ENCODE measurements at regions of chr7 and their contacts with region 1.

Region 1: GRCh38 chr7:95690367-95690947 is 81.9 kb upstream of the DYNC1I1 start:
- DNase-seq: peak; percentile 59
- H3K4me3 ChIP-seq: no peak overlapping the region
- H3K27ac ChIP-seq: no peak overlapping the region
- H3K4me1 ChIP-seq: no peaks in the 10 kb centered on the region
- H3K27me3 ChIP-seq: peaks cover 0 to 5% of the 10 kb centered on the region in 2 experiments
- CTCF ChIP-seq: peak; percentile 37 to 42
- POLR2A ChIP-seq: no peak

Region 2: DNA sequence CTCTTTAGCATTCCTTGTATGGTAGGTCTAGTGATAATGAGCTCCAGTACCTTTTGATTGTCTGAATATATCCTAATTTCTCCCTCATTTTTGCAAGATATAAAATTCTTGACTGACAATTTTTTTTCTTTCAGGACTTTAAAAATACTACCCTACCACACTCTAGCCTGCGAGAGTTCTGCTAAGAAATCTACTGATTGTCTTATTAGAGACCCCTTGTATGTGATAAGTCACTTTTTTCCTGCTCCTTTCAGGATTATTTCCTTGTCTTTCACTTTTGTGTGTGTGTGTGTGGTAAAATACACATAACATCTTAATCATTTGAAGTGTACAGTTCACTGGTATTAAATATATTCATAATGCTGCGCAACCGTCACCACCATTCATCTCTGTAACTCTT is 851.7 kb before region 1 on chr7:
- CTCF ChIA-PET with region 1: no interaction called
- POLR2A ChIA-PET with region 1: no interaction called
- dilution Hi-C with region 1: no loop called
- intact Hi-C with region 1: no loop called
- DNase-seq: no peak
- H3K4me3 ChIP-seq: no peak overlapping the region
- H3K27ac ChIP-seq: no peak overlapping the region
- H3K4me1 ChIP-seq: no peaks in the 10 kb centered on the region
- H3K27me3 ChIP-seq: no peaks in the 10 kb centered on the region
- CTCF ChIP-seq: no peak
- POLR2A ChIP-seq: no peak

Region 3: DNA sequence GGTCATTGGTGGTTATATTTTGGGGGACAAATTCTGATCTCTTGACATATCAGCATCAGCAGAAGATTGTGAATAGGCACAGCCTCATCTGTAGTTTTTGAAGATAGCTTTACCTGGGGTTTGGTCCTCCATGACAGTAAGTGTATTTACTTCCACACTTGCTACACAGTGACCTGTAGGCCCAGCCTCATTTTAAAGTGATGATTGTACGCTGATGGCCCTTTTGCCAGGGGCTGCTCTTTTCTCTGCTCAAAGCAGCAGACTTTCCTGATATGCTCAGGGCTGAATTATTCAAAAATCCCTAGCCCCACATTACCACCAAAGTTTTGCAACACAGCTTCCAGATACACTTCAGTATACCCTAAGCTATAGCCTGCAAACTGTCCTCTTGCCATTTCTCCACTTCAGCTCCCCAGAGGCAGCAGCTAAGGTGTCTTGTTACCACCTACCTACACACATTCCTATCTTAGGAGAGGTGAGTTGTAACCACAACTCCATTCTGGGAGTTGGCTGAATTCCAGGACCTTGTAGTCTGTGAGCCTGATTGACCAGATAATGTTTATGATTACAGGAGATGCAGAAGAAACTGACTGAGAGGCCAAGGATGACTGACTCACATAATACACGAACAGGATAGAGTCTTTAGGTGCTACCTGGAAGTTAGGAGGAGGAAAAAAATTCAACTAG is 198.7 kb before region 1 on chr7:
- CTCF ChIA-PET with region 1: interaction called, 14 read pairs
- POLR2A ChIA-PET with region 1: no interaction called
- dilution Hi-C with region 1: no loop called
- intact Hi-C with region 1: no loop called
- DNase-seq: no peak
- H3K4me3 ChIP-seq: no peak overlapping the region
- H3K27ac ChIP-seq: no peak overlapping the region
- H3K4me1 ChIP-seq: no peaks in the 10 kb centered on the region
- H3K27me3 ChIP-seq: peaks cover 3% of the 10 kb centered on the region in 2 experiments
- CTCF ChIP-seq: no peak
- POLR2A ChIP-seq: no peak

Region 4: GRCh38 chr7:95501261-95501832 is 189.1 kb before region 1 on chr7:
- CTCF ChIA-PET with region 1: interaction called, 12 read pairs
- POLR2A ChIA-PET with region 1: no interaction called
- dilution Hi-C with region 1: no loop called
- intact Hi-C with region 1: no loop called
- DNase-seq: no peak
- H3K4me3 ChIP-seq: no peak overlapping the region
- H3K27ac ChIP-seq: no peak overlapping the region
- H3K4me1 ChIP-seq: peaks cover 9% of the 10 kb centered on the region
- H3K27me3 ChIP-seq: no peaks in the 10 kb centered on the region
- CTCF ChIP-seq: no peak
- POLR2A ChIP-seq: no peak

Region 5: GRCh38 chr7:95527033-95527775 is 163.3 kb before region 1 on chr7:
- CTCF ChIA-PET with region 1: interaction called, 917 read pairs
- POLR2A ChIA-PET with region 1: no interaction called
- dilution Hi-C with region 1: no loop called
- intact Hi-C with region 1: loop called (anchors 1 kb)
- DNase-seq: peak; percentile 52
- H3K4me3 ChIP-seq: no peak overlapping the region
- H3K27ac ChIP-seq: no peak overlapping the region
- H3K4me1 ChIP-seq: peaks cover 2% of the 10 kb centered on the region
- H3K27me3 ChIP-seq: peaks cover 12 to 13% of the 10 kb centered on the region in 2 experiments
- CTCF ChIP-seq: peak; percentile 75 to 78
- POLR2A ChIP-seq: no peak

Region 6: DNA sequence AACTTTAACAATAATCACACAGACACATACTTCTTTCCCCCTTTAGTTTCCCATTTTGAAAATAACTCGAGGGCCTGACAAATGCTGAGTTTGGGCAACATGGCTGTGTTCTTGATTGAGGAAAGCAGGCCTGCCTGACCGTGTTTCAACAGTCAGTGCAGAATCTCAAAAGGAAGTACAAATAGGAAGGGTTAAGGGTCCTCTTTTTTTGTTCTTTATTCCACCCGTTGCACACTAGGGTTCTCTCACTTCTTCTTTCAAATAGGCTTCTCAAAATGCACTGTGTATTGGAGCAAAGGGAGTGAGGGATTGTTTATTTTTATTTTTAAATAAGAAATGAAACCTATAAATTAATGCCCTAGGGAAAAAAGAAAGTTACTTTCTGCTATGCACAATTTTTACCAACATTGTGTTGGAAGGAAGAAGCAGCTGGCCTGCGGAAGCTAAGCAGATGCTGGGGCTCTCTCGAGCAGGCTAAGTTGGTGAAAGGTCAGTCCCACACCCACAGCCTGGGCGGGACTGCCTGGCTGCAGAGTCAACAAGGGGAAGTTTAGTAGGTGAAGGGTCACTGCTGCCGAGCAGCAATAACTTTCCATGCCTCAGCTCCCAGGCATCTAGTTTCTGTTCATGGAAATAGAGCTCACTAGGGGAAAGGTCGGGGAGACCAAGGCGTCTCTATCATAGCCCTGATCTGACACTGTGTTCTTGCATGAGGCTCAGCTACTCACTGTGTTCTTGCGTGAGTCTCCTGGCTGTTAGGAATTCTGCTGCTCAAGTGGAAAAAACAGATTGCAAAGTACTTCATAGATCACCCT is 81.9 kb before region 1 on chr7:
- CTCF ChIA-PET with region 1: interaction called, 10 read pairs
- POLR2A ChIA-PET with region 1: no interaction called
- dilution Hi-C with region 1: no loop called
- intact Hi-C with region 1: no loop called
- DNase-seq: peak; percentile 99
- H3K4me3 ChIP-seq: peak overlapping the region in 1 of 3 experiments; percentile 38
- H3K27ac ChIP-seq: no peak overlapping the region
- H3K4me1 ChIP-seq: peaks cover 21% of the 10 kb centered on the region
- H3K27me3 ChIP-seq: peaks cover 0 to 2% of the 10 kb centered on the region in 2 experiments
- CTCF ChIP-seq: no peak
- POLR2A ChIP-seq: no peak

Region 7: DNA sequence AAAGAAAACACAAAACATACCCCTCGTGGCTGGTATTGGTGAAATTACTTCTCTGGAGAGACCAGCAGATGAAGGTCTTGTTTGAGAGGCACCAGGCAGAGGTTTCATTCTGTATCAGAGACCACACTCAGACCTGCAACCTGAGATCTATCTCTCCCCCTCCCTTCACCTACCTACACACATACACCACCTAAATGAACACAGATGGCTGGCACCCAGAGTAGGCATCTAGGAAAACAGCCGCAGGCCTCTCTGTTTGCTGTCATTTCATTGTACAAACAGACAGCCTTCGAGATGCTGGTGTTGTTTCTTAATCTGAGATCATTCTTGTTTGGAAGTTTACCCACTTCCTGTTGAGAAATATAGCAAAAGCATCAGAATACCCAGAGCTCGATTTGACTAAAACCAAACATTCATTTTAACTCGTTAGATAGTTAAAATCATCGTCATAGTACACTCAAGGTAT is 805.3 kb after region 1 on chr7:
- CTCF ChIA-PET with region 1: no interaction called
- POLR2A ChIA-PET with region 1: no interaction called
- dilution Hi-C with region 1: no loop called
- intact Hi-C with region 1: no loop called
- DNase-seq: no peak
- H3K4me3 ChIP-seq: no peak overlapping the region
- H3K27ac ChIP-seq: no peak overlapping the region
- H3K4me1 ChIP-seq: no peaks in the 10 kb centered on the region
- H3K27me3 ChIP-seq: peaks cover 1 to 3% of the 10 kb centered on the region in 2 experiments
- CTCF ChIP-seq: no peak
- POLR2A ChIP-seq: no peak

Measured in endothelial cell of umbilical vein (primary cell).